ENCODE measurements at regions of chr3 and their contacts with region 1.

Region 1: DNA sequence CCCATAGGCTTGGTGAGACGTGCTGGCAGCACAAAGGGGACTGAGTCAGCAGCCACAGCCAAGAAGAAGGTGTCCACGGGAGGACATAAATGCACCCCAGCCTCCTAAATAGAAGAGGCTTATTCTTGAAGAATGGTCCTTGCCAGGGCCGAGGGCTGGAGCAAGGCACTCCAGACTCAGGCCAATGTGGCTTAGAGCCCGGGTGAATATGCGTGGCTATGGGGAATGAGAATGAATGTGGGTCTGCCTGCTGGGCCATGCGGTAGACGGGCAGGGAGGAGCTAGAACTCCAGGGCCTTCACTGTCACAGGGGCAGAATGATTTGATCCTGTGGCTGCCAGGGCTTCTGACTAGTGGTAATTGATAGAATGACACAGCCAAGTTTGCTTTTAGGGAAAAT is 34.0 kb downstream of the DHX30 start:
- DNase-seq: no peak
- H3K4me3 ChIP-seq: no peak overlapping the region
- H3K4me3 Mint-ChIP-seq: no peak overlapping the region
- H3K27ac ChIP-seq: no peak overlapping the region
- H3K27ac Mint-ChIP-seq: peak overlapping the region in 2 of 8 donors; percentile 52 to 70
- H3K4me1 ChIP-seq: no peaks in the 10 kb centered on the region
- H3K4me1 Mint-ChIP-seq: peaks cover 0 to 5% (median 5%) of the 10 kb centered on the region in 3 donors
- H3K27me3 ChIP-seq: no peaks in the 10 kb centered on the region
- H3K27me3 Mint-ChIP-seq: no peaks in the 10 kb centered on the region

Region 2: DNA sequence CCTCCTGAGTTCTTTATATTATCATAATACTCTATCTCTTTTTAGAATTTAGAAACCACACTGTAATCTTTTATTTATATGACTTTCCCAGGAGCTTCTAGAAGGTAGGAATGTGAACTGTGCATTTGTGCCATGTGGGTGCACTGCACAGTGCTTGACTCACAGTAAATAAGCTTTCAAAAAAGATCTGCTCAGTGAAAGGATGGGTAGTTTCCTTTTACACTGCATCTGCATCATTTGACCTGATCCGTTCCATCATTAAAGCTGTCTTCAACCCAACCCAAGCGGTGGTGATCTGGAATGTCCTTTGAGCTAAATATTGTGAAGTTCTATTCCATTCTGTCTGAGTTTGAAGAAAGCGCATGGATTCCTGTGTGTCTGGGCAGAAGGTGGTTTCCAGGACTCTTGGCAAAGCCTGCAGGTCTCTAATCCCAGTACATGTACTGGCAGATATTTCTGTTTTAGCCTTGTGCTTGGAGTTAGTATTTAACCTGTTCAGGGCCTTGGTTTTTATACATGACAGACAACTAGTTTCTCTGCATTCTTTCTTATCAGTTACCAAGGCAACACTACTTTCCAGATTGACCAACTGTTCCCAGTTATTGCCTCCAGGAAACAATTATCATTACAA is 62.6 kb after region 1 on chr3:
- CTCF ChIA-PET with region 1: no interaction called
- POLR2A ChIA-PET with region 1: no interaction called
- DNase-seq: no peak
- H3K4me3 ChIP-seq: no peak overlapping the region
- H3K4me3 Mint-ChIP-seq: no peak overlapping the region
- H3K27ac ChIP-seq: no peak overlapping the region
- H3K27ac Mint-ChIP-seq: peak overlapping the region in 2 of 8 donors; percentile 17 to 68
- H3K4me1 ChIP-seq: no peaks in the 10 kb centered on the region
- H3K4me1 Mint-ChIP-seq: peaks cover 0 to 8% (median 4%) of the 10 kb centered on the region in 3 donors
- H3K27me3 ChIP-seq: no peaks in the 10 kb centered on the region
- H3K27me3 Mint-ChIP-seq: no peaks in the 10 kb centered on the region

Region 3: GRCh38 chr3:47950453-47951169 is 113.6 kb after region 1 on chr3:
- CTCF ChIA-PET with region 1: no interaction called
- POLR2A ChIA-PET with region 1: no interaction called
- DNase-seq: no peak
- H3K4me3 ChIP-seq: no peak overlapping the region
- H3K4me3 Mint-ChIP-seq: no peak overlapping the region
- H3K27ac ChIP-seq: no peak overlapping the region
- H3K27ac Mint-ChIP-seq: no peak overlapping the region
- H3K4me1 ChIP-seq: no peaks in the 10 kb centered on the region
- H3K4me1 Mint-ChIP-seq: peaks cover 0 to 1% (median 0%) of the 10 kb centered on the region in 3 donors
- H3K27me3 ChIP-seq: no peaks in the 10 kb centered on the region
- H3K27me3 Mint-ChIP-seq: no peaks in the 10 kb centered on the region

Region 4: GRCh38 chr3:48151058-48151806 is 314.2 kb after region 1 on chr3:
- CTCF ChIA-PET with region 1: interaction called, 12 read pairs
- POLR2A ChIA-PET with region 1: no interaction called
- DNase-seq: peak; percentile 12 to 71 (median 30)
- H3K4me3 ChIP-seq: no peak overlapping the region
- H3K4me3 Mint-ChIP-seq: no peak overlapping the region
- H3K27ac ChIP-seq: no peak overlapping the region
- H3K27ac Mint-ChIP-seq: no peak overlapping the region
- H3K4me1 ChIP-seq: no peaks in the 10 kb centered on the region
- H3K4me1 Mint-ChIP-seq: no peaks in the 10 kb centered on the region
- H3K27me3 ChIP-seq: no peaks in the 10 kb centered on the region
- H3K27me3 Mint-ChIP-seq: peaks cover 0 to 4% of the 10 kb centered on the region in 2 donors

Region 5: DNA sequence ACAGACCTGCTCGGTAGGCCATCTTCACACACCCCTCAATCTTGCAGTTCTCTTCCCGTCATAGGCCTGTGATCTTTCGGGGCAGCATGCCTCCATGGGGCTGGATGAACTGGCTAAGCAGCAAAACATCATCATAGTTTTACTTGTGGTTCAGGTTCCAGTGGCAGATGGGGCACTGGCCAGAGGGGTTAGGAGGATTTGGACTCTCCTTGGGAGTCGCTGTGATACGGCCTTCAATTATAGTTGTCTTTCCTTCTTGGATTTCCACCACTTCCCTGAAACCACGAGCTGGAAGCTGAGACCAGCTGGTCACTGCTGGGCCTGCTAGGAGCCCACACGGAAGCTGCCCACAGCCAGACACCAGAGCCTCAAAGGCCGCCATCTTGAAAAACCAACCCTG is 419.6 kb after region 1 on chr3:
- CTCF ChIA-PET with region 1: no interaction called
- POLR2A ChIA-PET with region 1: interaction called, 11 read pairs
- DNase-seq: no peak
- H3K4me3 ChIP-seq: no peak overlapping the region
- H3K4me3 Mint-ChIP-seq: no peak overlapping the region
- H3K27ac ChIP-seq: no peak overlapping the region
- H3K27ac Mint-ChIP-seq: no peak overlapping the region
- H3K4me1 ChIP-seq: no peaks in the 10 kb centered on the region
- H3K4me1 Mint-ChIP-seq: peaks cover 3 to 17% (median 7%) of the 10 kb centered on the region in 3 donors
- H3K27me3 ChIP-seq: no peaks in the 10 kb centered on the region
- H3K27me3 Mint-ChIP-seq: no peaks in the 10 kb centered on the region

Measured in CD8-positive, alpha-beta memory T cell (primary cell).